ENCODE measurements at regions of chr5 and their contacts with region 1.

Region 1: DNA sequence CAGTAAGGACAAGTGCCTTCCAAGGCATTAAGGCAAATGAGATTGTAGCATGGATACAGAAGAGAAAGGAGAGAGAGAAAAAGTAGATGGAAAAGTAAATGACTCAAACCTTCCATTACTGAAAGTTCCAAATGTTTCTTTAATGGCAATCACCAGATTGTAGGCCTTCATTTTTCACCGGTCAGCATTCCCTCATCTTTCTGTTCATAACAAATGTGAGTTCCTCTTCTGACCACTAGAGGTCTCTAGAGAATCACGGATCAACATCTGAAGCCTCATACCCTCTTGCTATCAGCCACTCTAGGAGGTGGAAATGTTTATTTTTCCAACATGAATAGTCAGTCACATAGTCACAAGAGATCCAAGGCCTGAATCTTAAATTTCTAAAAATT is 73.6 kb upstream of the RPS23 start:
- DNase-seq: no peak
- H3K4me3 ChIP-seq: no peak overlapping the region
- CTCF ChIP-seq: peak; percentile 55

Region 2: GRCh38 chr5:82259172-82259800 is 92.5 kb before region 1 on chr5:
- CTCF ChIA-PET with region 1: no interaction called
- POLR2A ChIA-PET with region 1: no interaction called
- DNase-seq: no peak
- H3K4me3 ChIP-seq: no peak overlapping the region
- CTCF ChIP-seq: peak; percentile 19

Region 3: DNA sequence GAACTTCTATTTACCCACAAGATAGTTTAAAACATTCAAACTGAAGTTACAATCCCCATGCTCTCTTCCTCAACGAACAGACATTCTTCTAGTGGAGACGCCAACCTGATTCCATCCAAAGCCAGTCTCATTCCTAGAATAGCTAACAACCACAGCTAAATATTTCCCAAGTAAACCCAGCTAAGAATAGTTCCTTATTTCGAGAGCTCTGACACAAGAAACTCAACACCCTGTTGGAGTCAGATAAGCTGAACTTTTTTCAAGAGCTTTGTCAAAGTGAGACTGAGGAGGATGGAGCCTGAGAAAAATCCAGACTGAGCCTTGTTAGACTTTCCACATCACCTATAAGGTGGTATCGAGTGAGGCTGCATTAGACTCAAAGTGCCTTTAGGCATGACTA is 16.9 kb before region 1 on chr5:
- CTCF ChIA-PET with region 1: interaction called, 143 read pairs
- POLR2A ChIA-PET with region 1: interaction called, 25 read pairs
- DNase-seq: peak; percentile 96
- H3K4me3 ChIP-seq: no peak overlapping the region
- CTCF ChIP-seq: no peak

Region 4: GRCh38 chr5:82421119-82421518 is 69.4 kb after region 1 on chr5:
- CTCF ChIA-PET with region 1: interaction called, 14 read pairs
- POLR2A ChIA-PET with region 1: no interaction called
- DNase-seq: peak; percentile 94
- H3K4me3 ChIP-seq: no peak overlapping the region
- CTCF ChIP-seq: peak; percentile 29

Region 5: DNA sequence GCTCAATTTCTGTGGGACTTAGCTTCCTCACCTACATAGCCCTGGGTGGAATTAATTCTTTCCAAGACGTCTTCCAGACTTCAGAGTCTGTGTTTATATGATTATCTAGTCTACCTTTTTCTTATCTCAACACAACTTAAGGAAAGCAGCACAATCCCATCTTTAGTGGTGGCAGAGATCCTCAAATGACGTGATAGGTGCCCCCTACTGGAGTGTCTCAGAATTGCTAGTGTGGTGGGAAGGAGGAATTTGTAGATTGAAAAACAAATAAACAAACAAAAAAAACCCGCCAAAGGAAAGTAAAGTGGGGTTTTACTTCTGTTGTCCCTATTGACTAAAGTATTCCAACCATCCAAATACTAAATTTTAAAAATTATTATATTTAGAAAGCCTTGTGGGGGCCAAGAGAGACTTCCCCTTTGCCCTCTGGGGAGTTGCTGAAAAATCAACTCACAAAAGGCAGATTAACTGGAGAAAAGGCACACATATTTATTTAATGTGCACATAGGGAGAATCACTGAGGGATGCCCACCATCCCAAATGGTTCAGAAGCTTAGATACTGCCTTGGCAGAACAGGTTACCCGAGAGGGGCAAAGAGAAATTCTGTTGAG is 442.2 kb after region 1 on chr5:
- CTCF ChIA-PET with region 1: interaction called, 11 read pairs
- POLR2A ChIA-PET with region 1: no interaction called
- DNase-seq: no peak
- H3K4me3 ChIP-seq: no peak overlapping the region
- CTCF ChIP-seq: peak; percentile 62

Measured in AG04449 (cell line).